A549 (cell line): ENCODE measurements at regions of chr5 and their contacts with region 1.

Region 1: GRCh38 chr5:73354406-73354805 is 94.2 kb downstream of the FOXD1 start:
- DNase-seq: no peak
- ATAC-seq: no peak
- H3K4me3 ChIP-seq: no peak overlapping the region
- H3K27ac ChIP-seq: no peak overlapping the region
- H3K4me1 ChIP-seq: no peaks in the 10 kb centered on the region
- CTCF ChIP-seq: no peak
- EP300 ChIP-seq: no peak
- POLR2A ChIP-seq: no peak
- RAD21 ChIP-seq: no peak

Region 2: DNA sequence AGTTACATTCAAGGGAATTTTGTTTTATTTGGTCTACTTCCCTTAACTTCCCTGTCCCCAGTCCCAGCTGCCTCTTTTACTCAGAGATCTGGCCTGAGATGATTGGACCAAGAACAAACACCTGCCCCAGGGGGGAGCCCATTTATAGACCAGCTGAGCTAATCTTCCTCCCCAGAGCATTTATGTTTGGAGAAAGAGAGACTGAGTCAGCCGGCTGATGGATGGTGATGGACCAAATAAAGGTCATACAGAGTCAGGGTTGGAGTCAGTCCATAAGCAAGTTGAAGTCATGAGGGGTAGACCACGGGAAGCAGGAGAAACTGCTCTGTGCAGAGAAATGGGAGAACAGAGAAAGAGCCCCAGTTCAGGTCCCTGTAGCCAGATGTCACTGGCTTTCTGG is 103.8 kb before region 1 on chr5:
- CTCF ChIA-PET with region 1: no interaction called
- POLR2A ChIA-PET with region 1: no interaction called
- DNase-seq: no peak
- ATAC-seq: no peak
- H3K4me3 ChIP-seq: no peak overlapping the region
- H3K27ac ChIP-seq: no peak overlapping the region
- H3K4me1 ChIP-seq: no peaks in the 10 kb centered on the region
- CTCF ChIP-seq: no peak
- EP300 ChIP-seq: no peak
- POLR2A ChIP-seq: no peak
- RAD21 ChIP-seq: no peak

Region 3: DNA sequence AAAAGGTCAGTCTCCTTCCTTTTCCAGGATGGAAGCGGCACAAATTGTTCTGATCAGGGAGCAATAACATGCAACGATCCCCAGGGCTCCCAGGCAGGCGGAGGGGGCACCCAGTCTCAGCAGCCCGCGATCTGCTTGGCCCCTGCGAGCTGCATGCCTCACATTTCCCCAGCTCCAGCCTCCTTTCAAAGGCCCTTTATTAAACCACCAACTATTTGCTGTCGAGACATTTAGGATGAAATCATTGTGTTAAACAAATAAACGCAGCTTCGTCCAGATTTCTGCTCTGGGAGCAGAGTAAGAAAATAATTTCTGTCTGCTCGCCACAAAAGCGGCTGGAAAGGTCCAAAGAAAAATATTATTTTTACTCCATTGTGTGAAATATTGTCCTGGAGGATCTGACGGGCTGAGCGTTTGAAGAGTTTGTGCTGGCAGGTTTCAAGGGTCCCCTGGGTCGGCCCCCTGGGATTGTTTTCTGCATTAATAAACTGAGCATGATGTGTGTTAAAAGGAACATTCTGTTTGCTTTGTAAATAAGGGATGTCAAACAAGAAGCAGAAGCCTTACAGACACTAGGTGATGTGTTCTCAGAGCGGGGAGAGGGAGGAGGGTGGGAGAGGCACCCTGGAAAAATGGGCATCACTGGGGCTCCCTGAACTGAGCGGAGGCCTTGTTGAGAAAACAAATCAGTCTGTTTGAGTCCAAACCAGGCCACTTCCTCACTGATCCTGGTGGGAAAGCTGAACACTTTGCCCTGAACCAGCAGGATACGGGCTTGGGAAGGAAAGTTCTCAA is 16.0 kb before region 1 on chr5:
- CTCF ChIA-PET with region 1: no interaction called
- POLR2A ChIA-PET with region 1: no interaction called
- DNase-seq: no peak
- ATAC-seq: peak in 1 of 2 experiments; percentile 61; a peak in 3 of 6 replicates
- H3K4me3 ChIP-seq: no peak overlapping the region
- H3K27ac ChIP-seq: peak overlapping the region in 1 of 2 experiments; percentile 2; a peak in 1 of 6 replicates
- H3K4me1 ChIP-seq: peaks cover 14% of the 10 kb centered on the region; the same call in 1 of the 3 replicates
- CTCF ChIP-seq: no peak
- EP300 ChIP-seq: no peak
- POLR2A ChIP-seq: no peak
- RAD21 ChIP-seq: no peak

Region 4: GRCh38 chr5:73365301-73365853 is 11.0 kb after region 1 on chr5:
- CTCF ChIA-PET with region 1: interaction called, 10 read pairs
- POLR2A ChIA-PET with region 1: no interaction called
- DNase-seq: peak; percentile 25 to 49
- ATAC-seq: peak; percentile 81 to 85
- H3K4me3 ChIP-seq: no peak overlapping the region
- H3K27ac ChIP-seq: peak overlapping the region; percentile 46 to 71; a peak in 5 of 6 replicates
- H3K4me1 ChIP-seq: peaks cover 35% of the 10 kb centered on the region
- CTCF ChIP-seq: no peak
- EP300 ChIP-seq: peak in 1 of 2 experiments; percentile 35; a peak in 1 of 5 replicates
- POLR2A ChIP-seq: no peak
- RAD21 ChIP-seq: no peak

Region 5: DNA sequence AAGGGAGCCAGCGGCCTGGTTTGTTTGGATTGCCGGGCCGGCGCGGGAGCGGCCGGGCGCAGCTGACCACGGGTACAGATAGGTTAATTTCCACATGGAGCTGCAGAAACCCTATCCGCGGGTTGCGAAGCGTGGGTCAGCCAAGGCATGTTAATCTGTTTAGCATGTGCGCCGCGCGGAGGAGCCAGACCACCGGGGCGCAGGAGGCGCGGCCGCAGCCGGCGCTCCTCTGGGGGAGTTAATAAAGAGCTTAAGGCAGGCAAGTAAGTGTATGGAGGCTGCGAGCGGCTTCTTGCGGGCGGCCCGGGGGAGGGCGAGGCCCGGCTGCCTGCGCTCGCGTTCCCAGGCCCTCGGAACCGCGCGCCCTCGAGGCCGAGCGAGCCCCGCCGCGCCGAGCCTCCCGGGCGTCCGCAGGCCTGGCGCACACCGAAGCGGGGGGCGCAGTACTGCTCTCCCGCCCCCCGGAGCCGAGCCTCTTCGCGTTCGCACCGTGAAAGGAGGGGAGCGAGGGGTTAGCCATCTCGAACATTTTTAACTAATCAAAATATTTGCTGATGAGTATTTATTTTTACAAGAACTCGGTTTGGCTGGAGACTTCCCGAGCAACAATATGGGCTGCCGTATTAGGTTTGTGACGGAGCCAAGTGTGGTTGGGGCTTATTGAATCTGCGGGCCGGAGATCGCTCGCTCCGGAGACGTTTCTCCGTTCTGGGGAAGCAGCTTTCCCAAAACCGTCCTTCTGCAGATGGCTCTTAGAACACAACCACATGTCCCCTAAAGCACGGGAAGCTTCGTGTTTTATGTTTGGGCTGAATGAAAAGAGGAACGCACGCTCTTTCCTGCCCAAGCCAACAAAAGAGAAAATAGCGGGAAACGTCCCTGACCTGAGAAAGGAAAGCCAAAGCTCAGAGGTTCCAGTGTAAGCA is 65.3 kb after region 1 on chr5:
- CTCF ChIA-PET with region 1: no interaction called
- POLR2A ChIA-PET with region 1: no interaction called
- DNase-seq: no peak
- ATAC-seq: no peak
- H3K4me3 ChIP-seq: no peak overlapping the region
- H3K27ac ChIP-seq: no peak overlapping the region
- H3K4me1 ChIP-seq: no peaks in the 10 kb centered on the region
- CTCF ChIP-seq: no peak
- EP300 ChIP-seq: no peak
- POLR2A ChIP-seq: no peak
- RAD21 ChIP-seq: no peak